Activated CD4-positive, alpha-beta T cell treated with anti-CD3 and anti-CD28 coated beads for 36 hours (primary cell): ENCODE measurements at regions of chr12 and their contacts with region 1.

Region 1: DNA sequence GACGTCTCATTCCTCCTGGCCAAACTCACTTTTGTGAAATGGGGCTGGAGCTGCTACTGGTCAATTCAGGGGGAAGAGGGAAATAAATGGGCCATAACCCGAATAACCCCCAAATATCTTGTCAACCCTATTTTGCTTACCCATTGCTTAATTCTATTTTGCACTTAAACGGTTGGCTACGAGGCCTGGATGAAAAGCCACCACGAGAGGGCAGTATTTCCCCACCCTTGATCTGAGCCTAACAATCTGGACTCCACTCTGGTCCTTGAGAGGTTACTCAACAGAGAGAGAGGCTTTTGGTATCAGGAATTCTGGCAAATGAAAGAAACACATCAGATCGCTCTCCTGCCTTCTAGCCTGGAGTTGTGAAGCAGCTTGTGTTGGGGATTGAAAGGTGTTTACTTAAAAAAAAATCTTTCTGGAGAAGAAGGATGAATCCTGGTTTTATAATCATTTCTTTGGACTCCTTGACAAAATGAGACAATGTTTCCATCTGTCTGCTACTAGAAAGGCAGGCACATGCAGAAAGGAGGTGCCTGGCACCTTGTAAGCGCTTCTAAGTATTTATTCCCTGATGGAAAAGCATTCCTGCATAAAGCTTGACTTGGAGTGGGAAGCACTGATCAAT is 22.4 kb upstream of the FBXO21 start:
- DNase-seq: peak; percentile 80
- ATAC-seq: peak; percentile 64
- H3K4me3 Mint-ChIP-seq: no peak overlapping the region
- H3K27ac Mint-ChIP-seq: no peak overlapping the region
- H3K4me1 Mint-ChIP-seq: no peaks in the 10 kb centered on the region
- H3K27me3 Mint-ChIP-seq: peaks cover 10% of the 10 kb centered on the region

Region 2: DNA sequence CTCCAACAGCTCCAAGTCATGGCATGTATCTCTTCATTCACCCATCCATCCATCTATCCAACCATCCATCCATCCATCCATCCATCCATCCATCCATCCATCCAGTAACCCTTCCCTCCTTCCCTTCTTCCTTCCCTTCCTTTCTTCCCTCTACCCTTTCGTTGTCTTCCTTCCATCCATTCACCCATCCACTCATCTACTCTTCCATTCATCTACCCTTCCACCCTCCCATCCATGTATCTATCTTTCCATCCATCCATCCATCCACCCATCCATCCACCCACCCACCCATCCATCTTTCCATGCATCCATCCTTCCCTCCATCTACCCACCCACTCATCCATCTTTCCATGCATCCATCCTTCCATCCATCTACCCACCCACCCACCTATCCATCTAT is 30.8 kb after region 1 on chr12:
- CTCF ChIA-PET with region 1: no interaction called
- POLR2A ChIA-PET with region 1: no interaction called
- intact Hi-C with region 1: no loop called
- DNase-seq: no peak
- ATAC-seq: no peak
- H3K4me3 Mint-ChIP-seq: no peak overlapping the region
- H3K27ac Mint-ChIP-seq: no peak overlapping the region
- H3K4me1 Mint-ChIP-seq: no peaks in the 10 kb centered on the region
- H3K27me3 Mint-ChIP-seq: peaks cover 12% of the 10 kb centered on the region

Region 3: GRCh38 chr12:117857632-117858612 is 645.2 kb after region 1 on chr12:
- CTCF ChIA-PET with region 1: interaction called, 3 read pairs
- POLR2A ChIA-PET with region 1: no interaction called
- intact Hi-C with region 1: loop called in 1 of 2 experiments (anchors 1 kb)
- DNase-seq: peak; percentile 82
- ATAC-seq: peak; percentile 61
- H3K4me3 Mint-ChIP-seq: no peak overlapping the region
- H3K27ac Mint-ChIP-seq: no peak overlapping the region
- H3K4me1 Mint-ChIP-seq: peaks cover 2% of the 10 kb centered on the region
- H3K27me3 Mint-ChIP-seq: peaks cover 2% of the 10 kb centered on the region

Region 4: GRCh38 chr12:118633071-118633470 is 1420.4 kb after region 1 on chr12:
- CTCF ChIA-PET with region 1: no interaction called
- POLR2A ChIA-PET with region 1: no interaction called
- intact Hi-C with region 1: no loop called
- DNase-seq: no peak
- ATAC-seq: no peak
- H3K4me3 Mint-ChIP-seq: no peak overlapping the region
- H3K27ac Mint-ChIP-seq: no peak overlapping the region
- H3K4me1 Mint-ChIP-seq: no peaks in the 10 kb centered on the region
- H3K27me3 Mint-ChIP-seq: peaks cover 1% of the 10 kb centered on the region